Activated T-helper 2 cell treated with anti-CD3 and anti-CD28 coated beads, Interferon-gamma antibody, Interleukin-2, Interleukin-4, amounts not matched to agents 10 μg/mL and 5 μg/mL and 100 μg/mL, durations not matched to agents 14 hours and 24 hours and 36 hours (primary cell): ENCODE measurements at regions of chr1 and their contacts with region 1.

Region 1: DNA sequence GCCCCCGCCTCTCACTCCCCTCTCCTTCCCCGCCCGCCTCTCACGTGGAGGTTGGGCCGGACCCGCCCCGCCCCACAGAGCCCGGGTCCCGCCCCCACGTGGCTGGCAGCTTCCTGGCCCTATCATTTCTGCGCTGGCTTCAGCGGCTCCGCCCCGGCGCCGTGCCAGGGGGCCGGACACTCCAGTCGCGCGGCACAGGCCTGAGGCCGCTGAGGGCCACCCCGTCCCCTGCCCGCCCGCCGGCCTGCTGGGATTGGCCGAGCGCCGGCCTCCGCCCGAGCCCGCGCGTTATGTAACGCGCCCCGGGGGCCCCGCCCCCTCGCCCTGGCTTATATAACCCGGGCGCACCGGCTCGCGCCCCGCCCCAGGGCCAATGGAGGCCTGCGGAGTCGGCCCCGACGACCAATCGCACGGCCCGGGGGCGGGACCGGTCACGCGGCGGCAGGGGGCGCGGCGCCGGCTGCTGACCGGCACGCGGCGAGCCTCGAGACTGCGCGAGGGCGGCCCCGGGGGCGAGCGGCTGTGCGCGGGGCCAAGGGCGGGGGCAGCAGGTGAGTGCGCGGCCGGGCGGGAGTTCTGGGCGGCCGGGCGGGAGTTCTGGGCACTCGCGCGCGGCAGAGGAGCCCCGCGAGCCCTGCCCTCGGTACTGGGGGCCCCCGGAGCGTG is at the start of gene PER3:
- DNase-seq: peak; percentile 84
- H3K4me3 Mint-ChIP-seq: peak within 1 kb of the TSS; percentile 70
- H3K27ac Mint-ChIP-seq: no peak within 1 kb of the TSS
- H3K4me1 Mint-ChIP-seq: peaks cover 17% of the 10 kb centered on the region
- H3K27me3 Mint-ChIP-seq: peaks cover 12% of the 10 kb centered on the region
- total RNA-seq, gene PER3: 3.3 and 4.5 TPM in 2 replicates

Region 2: DNA sequence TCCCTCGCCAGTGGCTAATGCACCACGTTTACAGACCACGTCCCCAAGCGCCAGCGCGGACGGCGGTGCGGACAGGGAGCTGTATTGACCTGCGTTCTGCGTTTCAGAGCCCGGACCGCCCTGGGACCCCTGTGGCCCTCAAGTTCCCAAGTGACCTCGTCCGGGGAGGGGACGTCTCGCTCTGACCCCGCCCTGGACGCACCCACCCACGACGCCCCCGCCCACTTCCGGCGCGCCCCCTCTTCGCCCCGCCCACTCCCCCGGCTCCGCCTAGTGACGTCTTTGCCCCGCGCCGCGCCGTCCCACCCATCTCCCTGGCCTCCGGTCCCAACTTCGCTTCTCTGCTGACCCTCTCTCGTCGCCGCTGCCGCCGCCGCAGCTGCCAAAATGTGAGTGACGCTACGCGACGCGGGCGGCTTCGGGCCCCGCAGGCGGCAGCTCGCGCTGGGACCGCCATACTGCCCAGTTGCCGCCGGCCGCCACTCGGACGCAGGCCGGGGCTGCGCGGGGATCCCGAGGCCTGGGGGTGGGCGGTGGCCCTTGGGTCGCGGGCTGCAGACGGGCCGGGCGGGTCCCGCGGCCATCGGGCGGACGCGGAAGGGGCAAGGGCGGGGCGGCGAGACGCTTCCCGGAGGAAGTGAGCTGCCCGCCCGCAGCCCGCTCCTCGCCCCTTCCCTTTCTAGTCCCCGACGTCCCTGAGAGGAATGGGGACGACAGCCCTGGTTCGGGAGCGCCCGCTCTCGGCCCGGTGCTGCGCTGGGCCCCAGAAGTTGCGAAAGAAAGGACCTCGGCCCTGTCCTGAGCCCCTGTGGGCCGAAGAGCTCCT is 12.7 kb before region 1 on chr1 and contains the start of gene VAMP3:
- intact Hi-C with region 1: loop called (anchors 1 kb)
- DNase-seq: peak; percentile 78
- H3K4me3 Mint-ChIP-seq: peak within 1 kb of the TSS; percentile 89
- H3K27ac Mint-ChIP-seq: peak within 1 kb of the TSS; percentile 74
- H3K4me1 Mint-ChIP-seq: peaks cover 20% of the 10 kb centered on the region
- H3K27me3 Mint-ChIP-seq: peaks cover 22% of the 10 kb centered on the region
- total RNA-seq, gene VAMP3: 21.6 and 25.2 TPM in 2 replicates